ENCODE measurements at regions of chr7 and their contacts with region 1.

Region 1: DNA sequence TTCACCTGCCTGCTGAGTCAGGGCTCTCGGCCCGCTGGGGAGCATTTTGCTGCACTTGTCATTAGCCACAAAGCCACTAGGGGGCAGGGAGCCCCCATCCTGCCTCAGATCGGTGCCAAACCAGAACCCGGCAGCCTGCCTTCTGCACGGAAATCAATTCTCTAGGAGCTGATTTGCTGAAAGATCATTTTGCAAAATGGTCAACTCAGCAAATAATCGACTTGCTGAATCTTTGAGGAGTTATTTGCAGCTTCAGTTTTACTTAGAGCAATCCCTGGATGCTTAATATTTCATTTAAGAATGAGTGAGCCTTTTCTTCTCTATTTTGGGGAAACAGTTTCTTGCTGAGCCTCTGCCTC is 1.7 kb upstream of the GIMAP8 start:
- DNase-seq: peak; percentile 73 to 91 (median 88)
- ATAC-seq: peak; percentile 73
- H3K4me3 ChIP-seq: peak overlapping the region; percentile 65
- H3K4me3 Mint-ChIP-seq: peak overlapping the region; percentile 94 to 100 (median 98)
- H3K27ac ChIP-seq: peak overlapping the region; percentile 84
- H3K27ac Mint-ChIP-seq: peak overlapping the region; percentile 95 to 99 (median 97)
- H3K4me1 ChIP-seq: peaks cover 32 to 36% of the 10 kb centered on the region in 2 donors
- H3K4me1 Mint-ChIP-seq: peaks cover 36 to 54% (median 43%) of the 10 kb centered on the region in 7 donors
- H3K27me3 ChIP-seq: no peaks in the 10 kb centered on the region
- H3K27me3 Mint-ChIP-seq: no peaks in the 10 kb centered on the region

Region 2: GRCh38 chr7:149460493-149461277 is 988.1 kb before region 1 on chr7 and contains the start of gene ZNF777:
- CTCF ChIA-PET with region 1: no interaction called
- POLR2A ChIA-PET with region 1: no interaction called
- intact Hi-C with region 1: no loop called
- DNase-seq: peak; percentile 65 to 84 (median 80)
- ATAC-seq: peak; percentile 99
- H3K4me3 ChIP-seq: peak within 1 kb of the TSS; percentile 80
- H3K4me3 Mint-ChIP-seq: peak within 1 kb of the TSS; percentile 78 to 91 (median 87)
- H3K27ac ChIP-seq: peak within 1 kb of the TSS; percentile 72
- H3K27ac Mint-ChIP-seq: peak within 1 kb of the TSS; percentile 28 to 89 (median 76)
- H3K4me1 ChIP-seq: peaks cover 4 to 16% of the 10 kb centered on the region in 2 donors
- H3K4me1 Mint-ChIP-seq: peaks cover 13 to 46% (median 35%) of the 10 kb centered on the region in 7 donors
- H3K27me3 ChIP-seq: no peaks in the 10 kb centered on the region
- H3K27me3 Mint-ChIP-seq: peaks cover 4 to 29% (median 10%) of the 10 kb centered on the region in 5 donors
- total RNA-seq, gene ZNF777: 11.2 to 16.1 (median 14.3) TPM

Region 3: GRCh38 chr7:149753401-149754233 is 695.2 kb before region 1 on chr7:
- CTCF ChIA-PET with region 1: no interaction called
- POLR2A ChIA-PET with region 1: no interaction called
- intact Hi-C with region 1: no loop called
- DNase-seq: no peak
- ATAC-seq: no peak
- H3K4me3 ChIP-seq: no peak overlapping the region
- H3K4me3 Mint-ChIP-seq: no peak overlapping the region
- H3K27ac ChIP-seq: no peak overlapping the region
- H3K27ac Mint-ChIP-seq: no peak overlapping the region
- H3K4me1 ChIP-seq: no peaks in the 10 kb centered on the region
- H3K4me1 Mint-ChIP-seq: peaks cover 0 to 2% (median 0%) of the 10 kb centered on the region in 7 donors
- H3K27me3 ChIP-seq: no peaks in the 10 kb centered on the region
- H3K27me3 Mint-ChIP-seq: peaks cover 0 to 6% (median 0%) of the 10 kb centered on the region in 5 donors

Region 4: GRCh38 chr7:150481186-150481920 is 32.6 kb after region 1 on chr7:
- CTCF ChIA-PET with region 1: interaction called, 16 read pairs
- POLR2A ChIA-PET with region 1: interaction called, 580 read pairs
- intact Hi-C with region 1: loop called (anchors 1 kb)
- DNase-seq: peak in 8 of 9 donors; percentile 46 to 81 (median 71)
- ATAC-seq: peak; percentile 68
- H3K4me3 ChIP-seq: peak overlapping the region; percentile 12
- H3K4me3 Mint-ChIP-seq: peak overlapping the region; percentile 79 to 97 (median 90)
- H3K27ac ChIP-seq: peak overlapping the region; percentile 95
- H3K27ac Mint-ChIP-seq: peak overlapping the region; percentile 97 to 100 (median 100)
- H3K4me1 ChIP-seq: peaks cover 84 to 89% of the 10 kb centered on the region in 2 donors
- H3K4me1 Mint-ChIP-seq: peaks cover 58 to 99% (median 92%) of the 10 kb centered on the region in 7 donors
- H3K27me3 ChIP-seq: no peaks in the 10 kb centered on the region
- H3K27me3 Mint-ChIP-seq: no peaks in the 10 kb centered on the region

Region 5: DNA sequence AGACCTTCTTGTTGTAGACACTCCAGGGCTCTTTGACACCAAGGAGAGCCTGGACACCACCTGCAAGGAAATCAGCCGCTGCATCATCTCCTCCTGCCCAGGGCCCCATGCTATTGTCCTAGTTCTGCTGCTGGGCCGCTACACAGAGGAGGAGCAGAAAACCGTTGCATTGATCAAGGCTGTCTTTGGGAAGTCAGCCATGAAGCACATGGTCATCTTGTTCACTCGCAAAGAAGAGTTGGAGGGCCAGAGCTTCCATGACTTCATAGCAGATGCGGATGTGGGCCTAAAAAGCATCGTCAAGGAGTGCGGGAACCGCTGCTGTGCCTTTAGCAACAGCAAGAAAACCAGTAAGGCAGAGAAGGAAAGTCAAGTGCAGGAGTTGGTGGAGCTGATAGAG is 71.4 kb after region 1 on chr7:
- CTCF ChIA-PET with region 1: interaction called, 91 read pairs
- POLR2A ChIA-PET with region 1: interaction called, 829 read pairs
- intact Hi-C with region 1: loop called in 1 of 2 experiments (anchors 1 kb)
- DNase-seq: peak in 4 of 9 donors; percentile 17 to 51 (median 42)
- ATAC-seq: peak; percentile 29
- H3K4me3 ChIP-seq: peak overlapping the region; percentile 59
- H3K4me3 Mint-ChIP-seq: peak overlapping the region; percentile 93 to 100 (median 99)
- H3K27ac ChIP-seq: peak overlapping the region; percentile 84
- H3K27ac Mint-ChIP-seq: peak overlapping the region; percentile 80 to 98 (median 94)
- H3K4me1 ChIP-seq: peaks cover 8 to 9% of the 10 kb centered on the region in 2 donors
- H3K4me1 Mint-ChIP-seq: peaks cover 22 to 42% (median 36%) of the 10 kb centered on the region in 7 donors
- H3K27me3 ChIP-seq: no peaks in the 10 kb centered on the region
- H3K27me3 Mint-ChIP-seq: no peaks in the 10 kb centered on the region

Region 6: GRCh38 chr7:150631866-150632864 is 183.4 kb after region 1 on chr7 and contains the start of gene GIMAP6:
- CTCF ChIA-PET with region 1: interaction called, 6 read pairs
- POLR2A ChIA-PET with region 1: interaction called, 74 read pairs
- intact Hi-C with region 1: loop called (anchors 1 kb)
- DNase-seq: peak in 8 of 9 donors; percentile 37 to 61 (median 44)
- ATAC-seq: peak; percentile 67
- H3K4me3 ChIP-seq: peak within 1 kb of the TSS; percentile 66
- H3K4me3 Mint-ChIP-seq: peak within 1 kb of the TSS; percentile 89 to 99 (median 95)
- H3K27ac ChIP-seq: peak within 1 kb of the TSS; percentile 74
- H3K27ac Mint-ChIP-seq: peak within 1 kb of the TSS; percentile 89 to 99 (median 95)
- H3K4me1 ChIP-seq: peaks cover 48 to 52% of the 10 kb centered on the region in 2 donors
- H3K4me1 Mint-ChIP-seq: peaks cover 54 to 92% (median 84%) of the 10 kb centered on the region in 7 donors
- H3K27me3 ChIP-seq: no peaks in the 10 kb centered on the region
- H3K27me3 Mint-ChIP-seq: no peaks in the 10 kb centered on the region
- total RNA-seq, gene GIMAP6: 40.3 to 173 (median 152) TPM

Region 7: GRCh38 chr7:150716368-150716767 is 267.6 kb after region 1 on chr7 and contains the start of gene GIMAP1:
- CTCF ChIA-PET with region 1: interaction called, 6 read pairs
- POLR2A ChIA-PET with region 1: interaction called, 95 read pairs
- intact Hi-C with region 1: loop called (anchors 1 kb)
- DNase-seq: peak in 8 of 9 donors; percentile 14 to 85 (median 81)
- ATAC-seq: peak; percentile 90
- H3K4me3 ChIP-seq: peak within 1 kb of the TSS; percentile 88
- H3K4me3 Mint-ChIP-seq: peak within 1 kb of the TSS; percentile 89 to 100 (median 98)
- H3K27ac ChIP-seq: peak within 1 kb of the TSS; percentile 86
- H3K27ac Mint-ChIP-seq: peak within 1 kb of the TSS; percentile 76 to 98 (median 95)
- H3K4me1 ChIP-seq: peaks cover 39 to 46% of the 10 kb centered on the region in 2 donors
- H3K4me1 Mint-ChIP-seq: peaks cover 38 to 77% (median 61%) of the 10 kb centered on the region in 7 donors
- H3K27me3 ChIP-seq: no peaks in the 10 kb centered on the region
- H3K27me3 Mint-ChIP-seq: no peaks in the 10 kb centered on the region
- total RNA-seq, gene GIMAP1: 23.3 to 124 (median 32.6) TPM

Region 8: DNA sequence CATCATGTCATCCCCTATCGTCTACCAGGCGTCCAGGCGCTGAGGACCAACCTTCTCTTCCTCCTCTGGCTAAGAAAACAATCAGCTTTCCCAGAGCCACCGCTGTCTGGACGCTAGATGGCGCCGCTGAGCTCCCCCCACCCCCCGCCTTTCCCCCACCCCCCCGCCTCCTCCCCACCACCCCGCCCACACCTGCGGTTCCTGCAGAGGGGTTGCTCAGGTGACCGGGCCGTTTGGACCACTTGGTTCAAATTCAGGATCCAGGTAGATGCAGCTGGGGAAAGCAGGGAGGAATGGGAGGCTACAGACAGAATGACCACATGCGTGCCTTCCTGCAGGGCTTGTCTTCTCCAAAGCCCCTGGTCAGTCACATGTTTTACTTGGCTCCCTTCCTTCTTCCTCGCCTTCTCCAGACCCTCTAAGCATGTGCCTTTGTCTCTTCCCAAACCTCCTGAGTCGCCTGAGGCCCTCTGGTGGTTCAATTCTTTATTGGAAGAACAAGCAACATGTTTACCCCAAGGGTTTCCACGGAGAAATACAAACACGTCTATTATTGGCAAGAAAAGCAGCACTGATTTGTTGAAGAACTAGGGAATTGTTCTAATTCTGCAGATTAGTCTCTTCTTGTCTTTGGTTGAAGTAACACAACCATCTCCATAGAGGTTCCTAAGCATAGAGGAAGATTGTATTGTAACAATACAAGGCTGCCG is 428.2 kb after region 1 on chr7:
- CTCF ChIA-PET with region 1: interaction called, 4 read pairs
- POLR2A ChIA-PET with region 1: no interaction called
- intact Hi-C with region 1: loop called in 1 of 2 experiments (anchors 2 kb)
- DNase-seq: peak in 8 of 9 donors; percentile 24 to 68 (median 51)
- ATAC-seq: peak; percentile 73
- H3K4me3 ChIP-seq: no peak overlapping the region
- H3K4me3 Mint-ChIP-seq: peak overlapping the region in 8 of 10 donors; percentile 45 to 68 (median 56)
- H3K27ac ChIP-seq: no peak overlapping the region
- H3K27ac Mint-ChIP-seq: peak overlapping the region in 8 of 9 donors; percentile 35 to 91 (median 75)
- H3K4me1 ChIP-seq: peaks cover 7 to 11% of the 10 kb centered on the region in 2 donors
- H3K4me1 Mint-ChIP-seq: peaks cover 3 to 32% (median 29%) of the 10 kb centered on the region in 7 donors
- H3K27me3 ChIP-seq: no peaks in the 10 kb centered on the region
- H3K27me3 Mint-ChIP-seq: peaks cover 0 to 63% (median 0%) of the 10 kb centered on the region in 5 donors

Region 9: DNA sequence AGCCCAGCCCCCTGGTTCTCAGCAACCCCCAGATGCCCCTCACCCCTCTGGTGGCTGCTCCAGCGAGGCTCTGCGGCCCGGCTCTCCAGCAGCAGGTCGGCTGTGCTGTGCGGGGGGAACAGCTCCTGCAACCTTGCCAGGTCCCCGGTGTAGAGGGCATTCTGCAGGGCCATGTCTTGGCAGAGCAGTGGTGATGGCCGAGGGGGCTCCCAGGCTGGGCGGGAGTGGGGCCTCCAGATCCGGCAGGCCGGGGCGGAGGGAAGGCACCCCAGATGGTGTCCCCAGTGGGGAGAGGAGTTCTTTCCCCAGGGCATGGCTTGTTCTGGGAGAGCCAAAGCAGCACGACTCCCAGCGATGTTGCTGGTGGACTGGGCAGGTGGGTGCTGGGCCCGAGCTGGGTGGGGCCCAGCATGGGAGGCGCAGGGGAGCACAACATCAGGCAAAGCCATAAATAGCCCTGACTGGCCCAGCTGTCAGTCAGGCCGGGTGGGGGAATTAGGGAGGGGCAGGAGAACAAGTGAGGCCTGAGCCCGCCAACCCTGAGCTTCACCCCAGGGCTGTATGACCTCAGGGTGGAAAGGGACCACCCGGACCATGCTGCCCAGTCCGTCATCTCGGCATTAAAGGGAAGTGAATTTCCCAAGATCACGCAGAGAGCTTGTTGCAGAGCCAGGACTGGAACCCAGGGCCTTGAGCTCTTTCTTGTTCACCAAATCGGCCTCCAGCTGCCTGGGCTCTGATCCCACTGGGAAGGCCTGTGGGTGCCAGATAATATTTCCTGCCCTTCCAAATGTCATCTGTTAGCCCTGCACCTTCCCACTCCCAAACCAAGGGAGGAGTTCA is 738.9 kb after region 1 on chr7:
- CTCF ChIA-PET with region 1: no interaction called
- POLR2A ChIA-PET with region 1: no interaction called
- intact Hi-C with region 1: no loop called
- DNase-seq: no peak
- ATAC-seq: no peak
- H3K4me3 ChIP-seq: no peak overlapping the region
- H3K4me3 Mint-ChIP-seq: no peak overlapping the region
- H3K27ac ChIP-seq: no peak overlapping the region
- H3K27ac Mint-ChIP-seq: no peak overlapping the region
- H3K4me1 ChIP-seq: no peaks in the 10 kb centered on the region
- H3K4me1 Mint-ChIP-seq: no peaks in the 10 kb centered on the region
- H3K27me3 ChIP-seq: no peaks in the 10 kb centered on the region
- H3K27me3 Mint-ChIP-seq: peaks cover 0 to 13% (median 0%) of the 10 kb centered on the region in 5 donors